Common myeloid progenitor, CD34-positive (primary cell): ENCODE measurements at regions of chr20 and their contacts with region 1.

Region 1: DNA sequence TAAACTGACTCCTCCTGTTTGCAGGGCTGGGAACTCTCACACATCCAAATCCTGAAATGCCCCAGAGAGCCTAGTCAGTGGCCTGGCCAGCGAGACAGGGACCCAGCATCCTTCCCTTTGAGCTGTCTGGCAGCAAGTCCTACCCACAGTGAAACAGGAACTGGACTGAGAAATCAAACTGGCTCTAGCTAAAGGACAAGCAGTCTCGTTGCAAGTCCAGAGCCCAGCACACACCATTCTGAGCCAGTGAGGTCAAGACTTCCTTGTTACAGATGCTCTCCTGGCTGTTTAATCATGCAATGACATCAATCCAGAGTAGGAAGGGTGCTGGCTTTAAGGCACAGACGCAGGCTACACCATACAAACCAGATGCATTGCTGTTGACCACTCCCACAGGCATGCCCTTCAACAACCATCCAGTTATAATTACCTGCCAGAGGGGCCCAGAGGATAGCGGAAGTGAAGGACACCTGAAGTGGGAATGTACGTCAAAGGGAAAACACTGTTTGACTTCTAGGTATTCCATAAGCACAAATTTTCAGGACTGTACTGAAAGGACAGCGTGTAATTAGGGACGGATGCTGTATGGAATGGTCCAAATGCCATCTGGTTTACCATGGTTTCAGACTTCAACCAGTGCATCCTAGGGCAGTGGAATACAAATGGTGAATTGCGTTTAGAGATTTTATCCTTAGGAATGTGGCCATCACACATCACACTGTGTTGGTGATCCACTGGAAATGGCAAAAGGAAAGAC is 114.4 kb downstream of the SLC23A2 start:
- DNase-seq: peak in 1 of 3 donors; percentile 14
- H3K4me3 ChIP-seq: no peak overlapping the region
- H3K27ac ChIP-seq: no peak overlapping the region
- H3K4me1 ChIP-seq: peaks cover 5 to 33% (median 23%) of the 10 kb centered on the region in 4 experiments
- H3K27me3 ChIP-seq: no peaks in the 10 kb centered on the region

Region 2: DNA sequence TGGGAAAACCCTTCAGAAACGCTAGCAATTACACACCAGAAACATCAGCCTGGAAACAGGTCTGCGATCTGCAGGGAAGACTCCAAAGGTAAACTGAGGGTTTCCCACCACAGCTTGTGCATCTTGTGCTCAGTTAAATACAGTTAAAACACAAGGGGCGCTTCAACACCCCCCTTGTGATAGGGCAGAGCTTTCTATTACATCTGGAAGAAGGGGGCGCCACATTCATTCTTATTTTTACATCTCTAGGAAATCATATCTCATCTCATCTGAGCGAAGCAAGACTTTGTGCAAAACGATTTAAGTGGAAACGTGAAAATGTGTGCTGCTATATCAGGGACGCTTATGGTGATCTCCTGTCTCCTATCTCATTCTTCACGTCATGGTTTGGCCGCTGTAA is 106.7 kb before region 1 on chr20:
- CTCF ChIA-PET with region 1: no interaction called
- POLR2A ChIA-PET with region 1: no interaction called
- DNase-seq: peak; percentile 42 to 53 (median 52)
- H3K4me3 ChIP-seq: no peak overlapping the region
- H3K27ac ChIP-seq: no peak overlapping the region
- H3K4me1 ChIP-seq: peaks cover 0 to 9% (median 3%) of the 10 kb centered on the region in 4 experiments
- H3K27me3 ChIP-seq: no peaks in the 10 kb centered on the region

Region 3: DNA sequence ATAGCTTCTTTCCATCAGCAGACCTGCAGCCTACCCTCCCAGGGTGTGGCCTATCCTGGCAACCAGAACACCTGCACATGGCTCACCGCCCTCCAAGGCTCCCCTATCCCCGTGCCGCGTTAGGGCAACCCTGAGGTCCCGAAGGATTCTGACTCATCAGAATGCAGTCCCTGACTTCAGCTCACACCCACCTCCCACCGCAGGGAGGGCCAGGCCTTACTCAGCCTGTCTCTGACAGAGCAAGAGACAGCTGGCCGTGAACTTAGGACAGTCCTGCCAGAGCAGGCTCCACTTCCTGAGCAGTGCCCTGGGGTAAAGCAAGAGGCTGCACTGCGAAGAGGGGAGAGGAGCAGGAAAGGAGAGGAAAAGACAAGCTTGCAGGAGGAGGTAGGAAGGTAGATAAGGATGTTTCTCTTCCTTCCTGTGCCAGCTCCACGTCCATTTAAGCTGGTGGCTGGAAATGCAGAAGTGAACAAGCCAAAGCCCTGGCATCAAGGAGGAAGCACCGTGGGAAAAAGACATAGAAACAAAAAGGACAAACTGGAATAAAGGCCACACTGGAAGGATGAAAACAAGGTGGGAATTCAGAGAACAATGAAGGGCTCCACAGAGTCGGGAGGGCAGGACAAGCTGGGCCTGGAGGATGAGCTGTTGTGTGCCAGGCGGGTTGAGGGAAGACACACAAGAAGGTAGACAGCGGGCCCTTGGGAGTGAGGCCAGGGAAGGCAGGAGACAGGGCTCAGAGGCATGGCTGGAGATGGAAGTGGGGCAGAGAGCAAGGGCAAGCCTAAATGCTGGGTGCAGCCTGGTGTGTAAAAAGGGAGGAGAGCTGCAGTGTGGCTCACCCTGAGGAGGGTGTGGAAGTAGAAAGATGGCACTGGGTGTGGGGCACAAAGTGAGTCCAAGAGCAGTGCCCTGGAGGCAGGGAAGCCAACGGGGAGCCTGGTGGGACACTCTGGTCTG is 11.6 kb after region 1 on chr20:
- CTCF ChIA-PET with region 1: interaction called, 12 read pairs
- POLR2A ChIA-PET with region 1: no interaction called
- DNase-seq: no peak
- H3K4me3 ChIP-seq: no peak overlapping the region
- H3K27ac ChIP-seq: no peak overlapping the region
- H3K4me1 ChIP-seq: peaks cover 0 to 34% (median 13%) of the 10 kb centered on the region in 4 experiments
- H3K27me3 ChIP-seq: no peaks in the 10 kb centered on the region